Activated naive CD4-positive, alpha-beta T cell treated with anti-CD3 and anti-CD28 coated beads for 36 hours (primary cell): ENCODE measurements at regions of chr15 and their contacts with region 1.

Region 1: GRCh38 chr15:34209421-34210282 is at the start of gene KATNBL1:
- DNase-seq: peak; percentile 98
- H3K4me3 Mint-ChIP-seq: peak within 1 kb of the TSS; percentile 87
- H3K27ac Mint-ChIP-seq: peak within 1 kb of the TSS; percentile 68
- H3K4me1 Mint-ChIP-seq: peaks cover 24% of the 10 kb centered on the region
- H3K27me3 Mint-ChIP-seq: no peaks in the 10 kb centered on the region
- total RNA-seq, gene KATNBL1: 46.4 to 51.6 TPM

Region 2: GRCh38 chr15:33292717-33293307 is 916.8 kb before region 1 on chr15:
- CTCF ChIA-PET with region 1: no interaction called
- intact Hi-C with region 1: loop called (anchors 5 kb)
- DNase-seq: peak; percentile 75
- H3K4me3 Mint-ChIP-seq: no peak overlapping the region
- H3K27ac Mint-ChIP-seq: no peak overlapping the region
- H3K4me1 Mint-ChIP-seq: no peaks in the 10 kb centered on the region
- H3K27me3 Mint-ChIP-seq: no peaks in the 10 kb centered on the region

Region 3: DNA sequence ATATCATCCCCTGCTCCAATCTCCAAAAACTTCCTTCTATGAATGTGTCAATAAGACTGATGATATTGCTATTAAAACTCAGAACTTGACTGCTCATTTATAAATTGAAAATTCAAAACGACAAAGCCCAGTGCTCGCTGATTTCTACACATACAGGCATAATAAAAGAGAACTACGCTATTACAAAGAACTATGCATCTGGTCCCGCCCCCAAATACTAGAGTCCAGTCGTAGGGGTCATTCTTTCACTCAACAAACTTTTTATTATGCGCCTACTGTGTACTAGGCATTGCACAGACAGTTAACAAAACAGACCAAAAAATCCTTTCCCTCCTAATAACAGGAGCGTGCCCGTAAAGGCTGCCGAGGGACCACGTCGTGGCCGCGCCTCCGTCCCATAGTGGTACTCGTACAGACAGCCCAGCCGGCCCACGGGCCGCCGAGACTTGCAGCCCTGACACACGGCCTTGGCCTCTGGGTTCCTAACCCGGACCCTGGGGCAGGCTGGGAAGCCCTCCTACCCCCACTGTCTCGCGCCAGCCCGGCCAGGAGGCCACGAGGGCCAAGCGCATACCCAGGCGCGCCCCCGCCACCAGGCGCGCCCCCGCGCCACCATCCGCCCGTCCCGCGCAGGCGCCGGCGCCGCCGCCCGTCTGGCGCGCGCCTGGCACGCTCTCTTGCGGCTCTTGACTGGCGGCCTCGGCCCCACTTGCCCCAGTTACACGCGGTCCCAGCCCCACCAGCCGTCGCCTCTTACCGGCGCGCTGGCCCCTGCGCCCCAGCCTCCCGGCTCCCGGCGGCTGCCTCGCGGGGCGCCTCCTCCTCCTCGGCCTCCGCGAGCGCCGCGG is 171.4 kb before region 1 on chr15:
- CTCF ChIA-PET with region 1: interaction called, 4 read pairs
- intact Hi-C with region 1: loop called (anchors 1 kb)
- DNase-seq: peak; percentile 70
- H3K4me3 Mint-ChIP-seq: peak overlapping the region; percentile 92
- H3K27ac Mint-ChIP-seq: peak overlapping the region; percentile 92
- H3K4me1 Mint-ChIP-seq: peaks cover 17% of the 10 kb centered on the region
- H3K27me3 Mint-ChIP-seq: no peaks in the 10 kb centered on the region

Region 4: GRCh38 chr15:34065941-34066340 is 143.7 kb before region 1 on chr15:
- CTCF ChIA-PET with region 1: interaction called, 59 read pairs
- intact Hi-C with region 1: loop called (anchors 2 kb)
- DNase-seq: no peak
- H3K4me3 Mint-ChIP-seq: no peak overlapping the region
- H3K27ac Mint-ChIP-seq: no peak overlapping the region
- H3K4me1 Mint-ChIP-seq: no peaks in the 10 kb centered on the region
- H3K27me3 Mint-ChIP-seq: no peaks in the 10 kb centered on the region

Region 5: DNA sequence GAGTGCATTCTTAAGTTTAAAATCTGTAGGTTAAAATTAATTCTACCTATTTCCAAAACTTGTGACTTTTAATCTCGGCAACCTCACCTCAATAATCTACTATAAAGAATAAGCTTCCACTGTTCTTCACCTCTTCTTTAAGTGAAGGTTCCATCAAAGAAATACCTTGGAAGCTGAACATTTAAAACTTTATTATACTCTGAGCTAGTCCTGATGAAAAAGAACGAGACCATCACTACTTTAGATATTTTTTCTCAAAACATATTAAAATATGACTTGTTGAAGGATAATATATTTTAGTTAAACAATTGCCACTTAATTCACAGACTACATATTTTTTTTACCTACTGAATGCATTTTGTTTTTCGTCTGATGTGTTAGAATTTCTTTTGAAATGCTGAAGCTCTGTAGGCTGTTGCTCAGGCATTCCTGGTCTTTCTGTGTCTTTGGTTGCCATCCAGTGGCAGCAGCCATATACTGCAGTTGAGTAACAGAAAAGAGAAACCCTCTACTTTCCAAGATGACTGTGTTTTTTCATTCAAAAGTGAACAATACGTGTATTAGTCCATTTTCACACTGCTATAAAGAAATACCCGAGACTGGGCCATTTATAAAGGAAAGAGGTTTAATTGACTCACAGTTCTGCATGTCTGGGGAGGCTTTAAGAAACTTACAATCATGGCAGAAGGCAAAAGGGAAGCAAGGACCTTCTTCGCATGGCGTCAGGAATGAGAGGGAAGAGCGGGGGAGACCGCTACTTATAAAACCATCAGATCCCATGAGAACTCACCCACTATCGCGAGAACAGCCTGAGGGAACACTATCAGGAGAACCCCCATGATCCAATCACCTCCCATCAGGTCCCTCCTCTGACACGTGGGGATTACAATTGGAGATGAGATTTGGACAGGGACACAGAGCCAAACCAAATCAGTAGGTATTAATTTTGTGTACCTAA is 378.3 kb after region 1 on chr15:
- CTCF ChIA-PET with region 1: interaction called, 3 read pairs
- intact Hi-C with region 1: loop called (anchors 2 kb)
- DNase-seq: peak; percentile 83
- H3K4me3 Mint-ChIP-seq: peak overlapping the region; percentile 74
- H3K27ac Mint-ChIP-seq: peak overlapping the region; percentile 61
- H3K4me1 Mint-ChIP-seq: peaks cover 13% of the 10 kb centered on the region
- H3K27me3 Mint-ChIP-seq: no peaks in the 10 kb centered on the region

Region 6: GRCh38 chr15:34865531-34865930 is 655.9 kb after region 1 on chr15:
- CTCF ChIA-PET with region 1: no interaction called
- intact Hi-C with region 1: no loop called
- DNase-seq: no peak
- H3K4me3 Mint-ChIP-seq: no peak overlapping the region
- H3K27ac Mint-ChIP-seq: no peak overlapping the region
- H3K4me1 Mint-ChIP-seq: no peaks in the 10 kb centered on the region
- H3K27me3 Mint-ChIP-seq: no peaks in the 10 kb centered on the region